Endothelial cell of umbilical vein (primary cell): ENCODE measurements at regions of chr12 and their contacts with region 1.

Region 1: GRCh38 chr12:3041558-3042164 is 35.5 kb upstream of the TSPAN9 start:
- DNase-seq: peak; percentile 68
- H3K4me3 ChIP-seq: no peak overlapping the region
- H3K27ac ChIP-seq: no peak overlapping the region
- H3K4me1 ChIP-seq: no peaks in the 10 kb centered on the region
- H3K27me3 ChIP-seq: no peaks in the 10 kb centered on the region
- CTCF ChIP-seq: peak; percentile 50 to 70
- POLR2A ChIP-seq: no peak

Region 2: DNA sequence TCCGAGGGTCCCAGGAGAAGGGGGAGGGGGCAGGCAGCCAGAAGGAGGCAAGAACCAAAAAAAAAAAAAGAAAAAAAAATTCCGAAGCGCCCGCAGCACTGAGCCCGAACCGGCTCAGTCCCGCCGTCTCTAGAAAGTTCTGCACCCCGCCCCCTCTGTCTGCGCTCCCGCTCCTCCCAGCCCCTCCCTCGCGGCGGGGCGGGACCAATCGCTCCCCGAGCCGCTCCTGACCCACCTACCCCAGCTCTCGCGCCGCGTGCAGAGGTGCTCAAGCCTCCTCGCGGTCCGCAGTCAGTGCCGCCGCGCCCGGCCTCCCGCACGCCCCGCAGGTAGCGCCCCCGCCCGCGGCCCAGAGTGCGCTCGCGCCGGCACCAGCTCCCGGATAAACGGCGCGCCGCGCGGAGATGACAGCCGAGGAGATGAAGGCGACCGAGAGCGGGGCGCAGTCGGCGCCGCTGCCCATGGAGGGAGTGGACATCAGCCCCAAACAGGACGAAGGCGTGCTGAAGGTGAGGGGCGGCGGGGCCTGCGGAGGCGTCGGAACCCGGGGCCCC is 246.8 kb before region 1 on chr12 and contains the start of gene FKBP4:
- CTCF ChIA-PET with region 1: interaction called, 6 read pairs
- POLR2A ChIA-PET with region 1: no interaction called
- dilution Hi-C with region 1: no loop called
- intact Hi-C with region 1: loop called (anchors 1 kb)
- DNase-seq: peak; percentile 82
- H3K4me3 ChIP-seq: peak within 1 kb of the TSS; percentile 69 to 93 (median 73)
- H3K27ac ChIP-seq: peak within 1 kb of the TSS; percentile 1
- H3K4me1 ChIP-seq: peaks cover 23% of the 10 kb centered on the region
- H3K27me3 ChIP-seq: peaks cover 5 to 7% of the 10 kb centered on the region in 2 experiments
- CTCF ChIP-seq: no peak
- POLR2A ChIP-seq: peak; percentile 76
- total RNA-seq, gene FKBP4: 74.1 and 85.6 TPM in 2 replicates

Region 3: GRCh38 chr12:2853626-2854025 is 188.0 kb before region 1 on chr12:
- CTCF ChIA-PET with region 1: interaction called, 34 read pairs
- POLR2A ChIA-PET with region 1: no interaction called
- dilution Hi-C with region 1: no loop called
- intact Hi-C with region 1: loop called (anchors 1 kb)
- DNase-seq: peak; percentile 69
- H3K4me3 ChIP-seq: no peak overlapping the region
- H3K27ac ChIP-seq: no peak overlapping the region
- H3K4me1 ChIP-seq: peaks cover 4% of the 10 kb centered on the region
- H3K27me3 ChIP-seq: no peaks in the 10 kb centered on the region
- CTCF ChIP-seq: peak; percentile 92 to 96
- POLR2A ChIP-seq: no peak

Region 4: GRCh38 chr12:2884810-2885209 is 156.9 kb before region 1 on chr12:
- CTCF ChIA-PET with region 1: interaction called, 78 read pairs
- POLR2A ChIA-PET with region 1: no interaction called
- dilution Hi-C with region 1: no loop called
- intact Hi-C with region 1: loop called (anchors 1 kb)
- DNase-seq: no peak
- H3K4me3 ChIP-seq: no peak overlapping the region
- H3K27ac ChIP-seq: no peak overlapping the region
- H3K4me1 ChIP-seq: no peaks in the 10 kb centered on the region
- H3K27me3 ChIP-seq: no peaks in the 10 kb centered on the region
- CTCF ChIP-seq: no peak
- POLR2A ChIP-seq: no peak

Region 5: GRCh38 chr12:2944401-2945047 is 97.1 kb before region 1 on chr12:
- CTCF ChIA-PET with region 1: interaction called, 17 read pairs
- POLR2A ChIA-PET with region 1: no interaction called
- dilution Hi-C with region 1: no loop called
- intact Hi-C with region 1: no loop called
- DNase-seq: peak; percentile 51
- H3K4me3 ChIP-seq: peak overlapping the region in 1 of 3 experiments; percentile 25
- H3K27ac ChIP-seq: no peak overlapping the region
- H3K4me1 ChIP-seq: peaks cover 3% of the 10 kb centered on the region
- H3K27me3 ChIP-seq: no peaks in the 10 kb centered on the region
- CTCF ChIP-seq: peak; percentile 67 to 84
- POLR2A ChIP-seq: no peak

Region 6: GRCh38 chr12:3055704-3056685 is 14.3 kb after region 1 on chr12:
- CTCF ChIA-PET with region 1: interaction called, 15 read pairs
- POLR2A ChIA-PET with region 1: no interaction called
- dilution Hi-C with region 1: no loop called
- intact Hi-C with region 1: no loop called
- DNase-seq: no peak
- H3K4me3 ChIP-seq: no peak overlapping the region
- H3K27ac ChIP-seq: no peak overlapping the region
- H3K4me1 ChIP-seq: no peaks in the 10 kb centered on the region
- H3K27me3 ChIP-seq: peaks cover 5% of the 10 kb centered on the region in 2 experiments
- CTCF ChIP-seq: no peak
- POLR2A ChIP-seq: no peak